AG04450 (cell line): ENCODE measurements at regions of chr5 and their contacts with region 1.

Region 1: GRCh38 chr5:111757355-111758283 is 625 bp upstream of the NREP start:
- DNase-seq: peak; percentile 89
- H3K4me3 ChIP-seq: peak overlapping the region; percentile 87
- H3K27ac ChIP-seq: peak overlapping the region; percentile 96
- H3K27me3 ChIP-seq: no peaks in the 10 kb centered on the region
- CTCF ChIP-seq: peak; percentile 65

Region 2: DNA sequence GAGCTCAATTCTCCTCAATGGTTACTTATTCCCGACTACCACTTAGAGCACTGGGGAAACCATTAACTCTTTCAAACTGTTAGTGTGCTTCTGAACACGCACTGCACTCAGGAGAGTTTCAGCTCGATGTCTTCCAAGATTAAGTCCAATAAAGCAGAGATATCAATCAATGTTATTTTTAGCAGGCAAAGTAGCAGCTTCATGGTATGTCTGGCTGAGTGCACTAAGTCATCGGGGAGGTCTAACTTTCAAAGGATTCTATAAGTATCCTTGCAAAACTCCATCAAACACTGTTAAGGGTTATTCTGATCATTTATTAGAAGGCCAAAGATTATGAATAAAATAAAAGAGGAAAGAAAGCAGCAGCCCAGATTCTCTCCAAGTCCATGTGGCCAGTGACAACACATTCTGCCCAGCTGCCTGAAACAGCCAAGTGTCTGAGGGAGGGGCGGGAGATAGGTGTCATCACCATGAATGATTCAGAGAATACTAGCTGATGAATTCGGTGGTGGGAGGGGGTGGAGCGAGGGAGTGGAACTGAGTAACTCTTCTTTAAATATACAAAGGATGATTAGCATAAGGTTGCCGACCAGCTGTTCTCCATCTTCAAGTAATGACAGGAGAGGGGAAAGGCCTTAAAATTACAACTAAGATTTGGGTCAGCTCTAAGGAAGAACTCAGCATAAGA is 21.9 kb before region 1 on chr5:
- CTCF ChIA-PET with region 1: interaction called, 3 read pairs
- POLR2A ChIA-PET with region 1: interaction called, 14 read pairs
- DNase-seq: peak; percentile 92
- H3K4me3 ChIP-seq: no peak overlapping the region
- H3K27ac ChIP-seq: peak overlapping the region; percentile 33
- H3K27me3 ChIP-seq: no peaks in the 10 kb centered on the region
- CTCF ChIP-seq: no peak

Region 3: GRCh38 chr5:111742177-111742994 is 15.2 kb before region 1 on chr5:
- CTCF ChIA-PET with region 1: interaction called, 4 read pairs
- POLR2A ChIA-PET with region 1: interaction called, 16 read pairs
- DNase-seq: peak; percentile 88
- H3K4me3 ChIP-seq: no peak overlapping the region; the same call in 1 of the 2 replicates
- H3K27ac ChIP-seq: peak overlapping the region; percentile 68
- H3K27me3 ChIP-seq: no peaks in the 10 kb centered on the region
- CTCF ChIP-seq: no peak

Region 4: DNA sequence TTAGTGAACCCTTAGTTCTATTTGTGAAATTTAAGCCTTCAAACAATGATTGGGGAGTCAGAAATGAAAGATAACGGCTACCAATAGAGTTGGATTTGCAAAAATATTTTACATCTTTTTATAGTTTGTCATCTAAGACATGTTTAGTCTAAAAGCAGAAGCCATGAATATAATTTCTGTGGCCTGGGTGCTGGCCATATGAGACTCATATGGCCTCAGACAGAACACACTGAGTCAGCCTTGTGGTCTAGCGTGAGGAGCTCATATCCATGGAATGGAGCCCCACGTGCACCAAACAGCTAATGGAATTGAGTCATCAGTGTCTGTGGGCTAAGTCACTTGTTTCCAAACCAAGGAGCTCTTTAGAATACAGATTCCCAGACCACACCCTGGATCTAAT is 240.1 kb after region 1 on chr5:
- CTCF ChIA-PET with region 1: interaction called, 3 read pairs
- POLR2A ChIA-PET with region 1: interaction called, 26 read pairs
- DNase-seq: peak; percentile 99
- H3K4me3 ChIP-seq: no peak overlapping the region
- H3K27ac ChIP-seq: peak overlapping the region; percentile 42
- H3K27me3 ChIP-seq: no peaks in the 10 kb centered on the region
- CTCF ChIP-seq: no peak